ENCODE measurements at regions of chr3 and their contacts with region 1.

Region 1: GRCh38 chr3:120160050-120160449 is 65.8 kb upstream of the GSK3B start:
- DNase-seq: peak; percentile 91 to 93
- H3K4me3 ChIP-seq: no peak overlapping the region
- H3K4me3 Mint-ChIP-seq: peak overlapping the region; percentile 38
- H3K27ac Mint-ChIP-seq: peak overlapping the region; percentile 90
- H3K4me1 ChIP-seq: peaks cover 58% of the 10 kb centered on the region
- H3K4me1 Mint-ChIP-seq: peaks cover 52% of the 10 kb centered on the region
- H3K27me3 ChIP-seq: no peaks in the 10 kb centered on the region; the same call in 1 of the 2 replicates
- H3K27me3 Mint-ChIP-seq: no peaks in the 10 kb centered on the region
- CTCF ChIP-seq: no peak

Region 2: DNA sequence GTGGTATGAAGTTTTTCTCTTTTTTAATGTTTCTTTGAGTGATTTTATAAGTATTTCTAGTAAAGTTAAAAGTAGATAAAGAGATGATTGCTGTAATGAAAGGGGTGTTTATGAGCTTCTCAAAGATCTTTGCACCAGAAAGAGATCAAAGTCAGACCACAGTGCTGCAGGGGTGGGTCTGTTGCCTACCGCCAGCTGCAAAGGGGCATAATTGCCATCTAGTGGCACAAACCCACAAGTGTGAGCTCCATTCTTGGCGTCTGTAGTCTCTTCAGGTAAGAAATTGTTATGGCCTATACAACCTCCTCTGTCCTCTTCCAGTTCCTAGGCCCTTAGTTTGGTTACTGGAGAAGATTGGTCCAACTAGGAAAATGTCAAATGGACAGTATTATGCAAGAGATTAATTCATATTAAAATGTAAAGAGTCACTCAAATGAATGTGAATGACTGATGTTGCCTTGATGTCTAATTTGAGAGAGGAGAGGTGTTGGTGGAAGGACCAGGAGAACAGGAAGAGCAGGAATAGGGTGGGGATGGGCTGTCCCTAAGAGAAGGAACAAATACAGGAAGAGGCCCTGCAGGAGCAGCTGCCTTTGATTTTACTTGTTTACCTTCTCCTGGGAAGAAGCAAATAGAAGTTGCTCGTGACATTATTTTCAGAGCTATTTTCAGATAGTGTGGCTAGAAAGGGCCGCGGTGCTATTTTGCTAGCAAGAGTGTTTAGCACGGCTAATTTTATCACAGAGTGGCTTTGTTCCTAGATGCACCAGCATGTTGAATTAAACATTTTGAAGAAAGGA is 12.8 kb before region 1 on chr3:
- CTCF ChIA-PET with region 1: interaction called, 7 read pairs
- POLR2A ChIA-PET with region 1: interaction called, 14 read pairs
- intact Hi-C with region 1: loop called (anchors 1 kb)
- DNase-seq: peak; percentile 76 to 80
- H3K4me3 ChIP-seq: no peak overlapping the region
- H3K4me3 Mint-ChIP-seq: peak overlapping the region; percentile 18
- H3K27ac Mint-ChIP-seq: peak overlapping the region; percentile 96
- H3K4me1 ChIP-seq: peaks cover 55% of the 10 kb centered on the region
- H3K4me1 Mint-ChIP-seq: peaks cover 51% of the 10 kb centered on the region
- H3K27me3 ChIP-seq: no peaks in the 10 kb centered on the region
- H3K27me3 Mint-ChIP-seq: no peaks in the 10 kb centered on the region
- CTCF ChIP-seq: no peak

Region 3: GRCh38 chr3:120177151-120177550 is 17.1 kb after region 1 on chr3:
- CTCF ChIA-PET with region 1: no interaction called
- POLR2A ChIA-PET with region 1: interaction called, 4 read pairs
- intact Hi-C with region 1: loop called (anchors 1 kb)
- DNase-seq: no peak
- H3K4me3 ChIP-seq: no peak overlapping the region
- H3K4me3 Mint-ChIP-seq: no peak overlapping the region
- H3K27ac Mint-ChIP-seq: peak overlapping the region; percentile 59
- H3K4me1 ChIP-seq: peaks cover 25% of the 10 kb centered on the region
- H3K4me1 Mint-ChIP-seq: peaks cover 24% of the 10 kb centered on the region
- H3K27me3 ChIP-seq: no peaks in the 10 kb centered on the region
- H3K27me3 Mint-ChIP-seq: no peaks in the 10 kb centered on the region
- CTCF ChIP-seq: no peak

Measured in Caco-2 (cell line).